Activated T-helper 1 cell treated with anti-CD3 and anti-CD28 coated beads, Interleukin-12 subunit alpha, Interleukin-12 subunit beta, Interleukin-2, Interleukin-4 antibody, amounts not matched to agents 30 ng/mL and 10 ng/mL and 1 ng/mL, durations not matched to agents 14 hours and 24 hours and 36 hours (primary cell): ENCODE measurements at regions of chr1 and their contacts with region 1.

Region 1: DNA sequence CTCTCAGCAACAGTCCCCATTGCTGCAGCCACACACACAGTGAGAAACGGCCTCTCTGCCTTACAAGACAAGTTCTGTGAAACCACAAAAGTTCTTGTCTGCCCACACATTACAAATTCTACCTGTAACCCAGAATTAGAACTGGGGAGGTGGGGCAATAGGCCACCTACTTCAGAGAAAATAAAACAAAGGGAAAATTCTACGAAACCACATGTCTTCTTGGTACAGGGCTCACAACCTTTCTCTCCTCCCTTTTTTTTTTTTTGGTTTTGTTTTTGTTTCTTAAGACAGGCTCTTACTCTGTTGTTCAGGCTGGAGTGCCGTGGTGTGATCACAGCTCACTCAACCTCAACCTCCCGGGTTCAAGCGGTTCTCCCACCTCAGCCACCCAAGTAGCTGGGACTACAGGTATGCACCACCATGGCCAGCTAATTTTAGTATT is 30.2 kb downstream of the LPAR3 start:
- DNase-seq: peak; percentile 66
- H3K4me3 Mint-ChIP-seq: peak overlapping the region; percentile 77
- H3K27ac Mint-ChIP-seq: peak overlapping the region; percentile 82
- H3K4me1 Mint-ChIP-seq: peaks cover 53% of the 10 kb centered on the region
- H3K27me3 Mint-ChIP-seq: peaks cover 1% of the 10 kb centered on the region

Region 2: GRCh38 chr1:84892705-84893618 is 30.1 kb after region 1 on chr1 and contains the start of gene LPAR3:
- intact Hi-C with region 1: loop called (anchors 2 kb)
- DNase-seq: no peak
- H3K4me3 Mint-ChIP-seq: peak within 1 kb of the TSS; percentile 81
- H3K27ac Mint-ChIP-seq: no peak within 1 kb of the TSS
- H3K4me1 Mint-ChIP-seq: peaks cover 30% of the 10 kb centered on the region
- H3K27me3 Mint-ChIP-seq: peaks cover 48% of the 10 kb centered on the region
- total RNA-seq, gene LPAR3: 0.34 and 0.47 TPM in 2 replicates

Region 3: GRCh38 chr1:85048296-85049064 is 185.6 kb after region 1 on chr1 and contains the start of gene MCOLN3:
- intact Hi-C with region 1: loop called (anchors 5 kb)
- DNase-seq: peak; percentile 28
- H3K4me3 Mint-ChIP-seq: peak within 1 kb of the TSS; percentile 83
- H3K27ac Mint-ChIP-seq: no peak within 1 kb of the TSS
- H3K4me1 Mint-ChIP-seq: peaks cover 37% of the 10 kb centered on the region
- H3K27me3 Mint-ChIP-seq: peaks cover 52% of the 10 kb centered on the region
- total RNA-seq, gene MCOLN3: 1.3 and 1.7 TPM in 2 replicates

Region 4: DNA sequence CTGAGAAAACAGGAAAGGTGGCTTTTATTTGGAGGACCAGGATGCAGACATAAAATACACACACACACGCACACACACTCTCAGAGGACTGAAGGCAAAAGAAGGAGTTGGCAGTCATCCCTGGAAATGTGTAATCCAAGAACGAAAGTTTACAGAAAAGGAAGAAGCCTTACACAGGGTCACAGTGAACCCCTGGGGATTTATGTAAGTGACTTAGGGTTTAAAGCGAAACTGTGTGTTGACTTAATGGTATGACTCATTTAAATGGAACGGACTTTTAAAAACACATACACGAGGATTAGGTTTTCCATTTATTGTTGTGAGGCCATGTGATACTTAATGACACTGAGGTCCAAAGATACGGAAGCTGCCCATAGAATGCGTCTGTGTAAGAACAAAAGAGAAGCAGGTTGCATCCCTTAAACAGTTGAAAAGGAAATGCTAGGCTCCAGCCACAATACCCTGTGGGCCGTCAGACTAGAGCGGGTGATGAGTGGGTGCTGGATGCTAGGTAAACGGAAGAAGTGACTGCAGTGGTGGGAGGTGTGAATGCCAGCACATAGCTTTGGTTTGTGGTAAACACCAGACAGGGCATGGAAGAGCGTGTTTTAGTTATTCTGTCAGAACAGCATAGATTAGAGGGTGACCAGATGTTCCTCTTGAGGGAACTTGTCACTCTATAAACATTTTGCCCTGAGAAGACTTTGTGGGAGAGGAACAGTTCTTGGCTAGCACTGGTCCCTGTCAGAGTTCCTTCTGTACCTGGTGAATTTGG is 435.2 kb after region 1 on chr1:
- intact Hi-C with region 1: loop called (anchors 2 kb)
- DNase-seq: peak; percentile 62
- H3K4me3 Mint-ChIP-seq: peak overlapping the region; percentile 1
- H3K27ac Mint-ChIP-seq: peak overlapping the region; percentile 80
- H3K4me1 Mint-ChIP-seq: peaks cover 34% of the 10 kb centered on the region
- H3K27me3 Mint-ChIP-seq: peaks cover 47% of the 10 kb centered on the region

Region 5: GRCh38 chr1:85576642-85577418 is 714.0 kb after region 1 on chr1:
- intact Hi-C with region 1: loop called (anchors 10 kb)
- DNase-seq: peak; percentile 47
- H3K4me3 Mint-ChIP-seq: peak overlapping the region; percentile 71
- H3K27ac Mint-ChIP-seq: no peak overlapping the region
- H3K4me1 Mint-ChIP-seq: peaks cover 19% of the 10 kb centered on the region
- H3K27me3 Mint-ChIP-seq: peaks cover 73% of the 10 kb centered on the region